Body of pancreas (tissue), 4 donors: ENCODE measurements at regions of chr12 and their contacts with region 1.

Region 1: DNA sequence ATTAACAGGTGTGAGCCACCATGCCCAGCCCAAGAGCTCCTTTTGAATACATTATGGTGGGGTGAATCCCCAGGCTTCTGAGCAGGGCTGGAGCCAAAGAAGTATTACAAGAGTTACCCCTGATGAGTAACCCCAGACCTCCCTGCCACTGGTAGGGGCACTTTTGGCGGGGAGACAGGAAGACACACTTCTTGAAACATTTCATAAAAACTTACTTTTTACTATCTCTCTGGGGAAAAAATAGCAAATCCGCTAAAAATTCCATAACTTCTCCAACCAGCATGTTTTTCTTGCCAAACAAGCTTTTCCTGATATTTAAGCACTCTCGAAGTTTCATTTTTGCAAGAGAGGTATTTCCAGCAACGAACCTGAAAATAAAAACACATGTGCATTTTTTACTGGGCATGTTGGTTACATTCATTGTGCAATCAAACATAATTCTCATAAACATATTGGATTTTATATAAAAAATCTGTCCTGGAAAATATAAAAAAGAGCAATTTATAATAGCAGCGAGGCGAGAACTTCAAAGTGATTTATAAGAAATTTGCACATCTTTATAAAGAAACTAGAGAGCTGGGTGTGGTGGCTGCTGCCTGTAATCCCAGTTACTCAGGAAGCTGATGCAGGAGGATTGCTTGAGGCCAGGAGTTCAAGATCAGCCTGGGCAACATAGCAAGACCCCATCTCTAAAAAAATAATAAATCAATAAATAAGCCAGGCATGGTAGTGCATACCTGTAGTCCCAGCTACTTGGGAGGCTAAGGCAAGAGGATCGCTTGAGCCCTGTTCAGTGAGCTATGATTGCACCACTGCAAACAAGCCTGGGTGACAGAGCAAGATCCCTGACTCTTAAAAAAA is 20.1 kb upstream of the NT5DC3 start:
- DNase-seq: no peak
- ATAC-seq: no peak
- H3K4me3 ChIP-seq: no peak overlapping the region
- H3K27ac ChIP-seq: no peak overlapping the region
- H3K4me1 ChIP-seq: peaks cover under 1% of the 10 kb centered on the region
- H3K27me3 ChIP-seq: no peaks in the 10 kb centered on the region
- CTCF ChIP-seq: no peak
- POLR2A ChIP-seq: no peak

Region 2: GRCh38 chr12:103779428-103780092 is 81.6 kb before region 1 on chr12:
- intact Hi-C with region 1: loop called (anchors 10 kb)
- DNase-seq: no peak
- ATAC-seq: no peak
- H3K4me3 ChIP-seq: no peak overlapping the region
- H3K27ac ChIP-seq: no peak overlapping the region
- H3K4me1 ChIP-seq: peaks cover 16% of the 10 kb centered on the region
- H3K27me3 ChIP-seq: no peaks in the 10 kb centered on the region
- CTCF ChIP-seq: no peak
- POLR2A ChIP-seq: no peak

Region 3: DNA sequence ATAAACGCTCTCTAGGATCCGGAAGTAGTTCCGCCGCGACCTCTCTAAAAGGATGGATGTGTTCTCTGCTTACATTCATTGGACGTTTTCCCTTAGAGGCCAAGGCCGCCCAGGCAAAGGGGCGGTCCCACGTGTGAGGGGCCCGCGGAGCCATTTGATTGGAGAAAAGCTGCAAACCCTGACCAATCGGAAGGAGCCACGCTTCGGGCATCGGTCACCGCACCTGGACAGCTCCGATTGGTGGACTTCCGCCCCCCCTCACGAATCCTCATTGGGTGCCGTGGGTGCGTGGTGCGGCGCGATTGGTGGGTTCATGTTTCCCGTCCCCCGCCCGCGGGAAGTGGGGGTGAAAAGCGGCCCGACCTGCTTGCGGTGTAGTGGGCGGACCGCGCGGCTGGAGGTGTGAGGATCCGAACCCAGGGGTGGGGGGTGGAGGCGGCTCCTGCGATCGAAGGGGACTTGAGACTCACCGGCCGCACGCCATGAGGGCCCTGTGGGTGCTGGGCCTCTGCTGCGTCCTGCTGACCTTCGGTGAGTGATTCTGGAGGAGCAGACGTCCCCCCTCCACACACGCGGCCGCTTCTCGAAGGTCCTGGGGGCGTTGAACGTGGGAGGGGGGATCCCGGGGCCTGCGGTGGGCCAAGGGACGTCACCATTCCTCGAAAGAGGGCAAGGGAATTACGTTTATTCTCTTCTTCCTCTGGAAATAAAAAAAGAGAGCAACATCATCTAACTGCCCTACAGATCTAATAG is 69.1 kb after region 1 on chr12 and contains the start of gene HSP90B1:
- intact Hi-C with region 1: no loop called
- DNase-seq: peak; percentile 99 to 100 (median 100)
- ATAC-seq: peak; percentile 93
- H3K4me3 ChIP-seq: peak within 1 kb of the TSS; percentile 65 to 97
- H3K27ac ChIP-seq: peak within 1 kb of the TSS; percentile 80 to 96 (median 88)
- H3K4me1 ChIP-seq: peaks cover 49% of the 10 kb centered on the region
- H3K27me3 ChIP-seq: no peaks in the 10 kb centered on the region
- CTCF ChIP-seq: no peak
- POLR2A ChIP-seq: peak; percentile 90 to 94 (median 93)
- total RNA-seq, gene HSP90B1: 216 to 628 TPM

Region 4: DNA sequence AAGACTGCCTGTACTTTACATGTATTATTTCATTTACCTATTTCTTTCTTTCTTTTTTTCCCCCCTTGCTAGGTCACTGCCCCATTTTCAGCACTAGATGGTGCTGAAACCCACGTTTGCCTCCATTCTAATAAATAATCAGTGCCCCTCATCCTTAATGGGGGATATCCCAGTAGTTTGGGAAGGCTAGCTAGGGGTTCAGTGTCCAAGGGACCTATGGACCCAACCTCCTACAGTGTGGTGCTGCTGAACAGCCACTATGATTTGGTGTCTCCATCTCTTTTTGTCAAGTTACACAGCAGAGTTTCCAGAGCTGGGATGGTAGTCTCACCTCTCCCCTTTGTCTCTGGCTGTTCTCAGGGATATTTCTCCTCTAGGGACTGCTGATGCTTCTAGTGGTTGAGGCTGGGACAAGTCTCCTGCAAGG is 196.7 kb after region 1 on chr12:
- intact Hi-C with region 1: no loop called
- DNase-seq: no peak
- ATAC-seq: no peak
- H3K4me3 ChIP-seq: no peak overlapping the region
- H3K27ac ChIP-seq: no peak overlapping the region
- H3K4me1 ChIP-seq: peaks cover 24% of the 10 kb centered on the region
- H3K27me3 ChIP-seq: no peaks in the 10 kb centered on the region
- CTCF ChIP-seq: peak in 6 of 7 experiments; percentile 26 to 63 (median 44)
- POLR2A ChIP-seq: no peak

Region 5: GRCh38 chr12:104358347-104359003 is 497.3 kb after region 1 on chr12:
- intact Hi-C with region 1: no loop called
- DNase-seq: peak; percentile 61 to 75 (median 70)
- ATAC-seq: peak; percentile 72
- H3K4me3 ChIP-seq: no peak overlapping the region
- H3K27ac ChIP-seq: no peak overlapping the region
- H3K4me1 ChIP-seq: no peaks in the 10 kb centered on the region
- H3K27me3 ChIP-seq: no peaks in the 10 kb centered on the region
- CTCF ChIP-seq: peak; percentile 77 to 89 (median 83)
- POLR2A ChIP-seq: no peak